Left ventricle myocardium superior (tissue), 1 donor: ENCODE measurements at regions of chr18 and their contacts with region 1.

Region 1: DNA sequence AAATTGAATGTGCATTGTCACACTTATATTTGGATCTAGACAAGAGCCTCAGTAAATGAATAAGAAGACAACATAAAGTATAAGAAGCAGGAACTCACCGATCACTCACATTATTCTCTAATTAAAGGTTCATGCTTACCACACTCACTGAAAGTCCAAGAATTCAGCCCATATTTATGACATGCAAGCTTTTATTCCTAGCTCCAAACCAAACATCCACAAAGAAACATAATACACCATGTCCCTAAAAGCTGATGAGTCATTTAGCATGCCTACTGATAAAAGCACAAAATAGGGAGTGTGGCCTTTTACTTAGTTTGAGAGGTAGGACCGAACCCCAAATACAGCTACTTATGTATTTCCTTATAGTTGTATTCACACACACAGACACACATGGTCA is 1094.6 kb upstream of the CDH2 start:
- DNase-seq: no peak
- ATAC-seq: no peak

Region 2: GRCh38 chr18:28372186-28372585 is 899.3 kb before region 1 on chr18:
- intact Hi-C with region 1: loop called (anchors 5 kb)
- DNase-seq: no peak
- ATAC-seq: no peak

Region 3: DNA sequence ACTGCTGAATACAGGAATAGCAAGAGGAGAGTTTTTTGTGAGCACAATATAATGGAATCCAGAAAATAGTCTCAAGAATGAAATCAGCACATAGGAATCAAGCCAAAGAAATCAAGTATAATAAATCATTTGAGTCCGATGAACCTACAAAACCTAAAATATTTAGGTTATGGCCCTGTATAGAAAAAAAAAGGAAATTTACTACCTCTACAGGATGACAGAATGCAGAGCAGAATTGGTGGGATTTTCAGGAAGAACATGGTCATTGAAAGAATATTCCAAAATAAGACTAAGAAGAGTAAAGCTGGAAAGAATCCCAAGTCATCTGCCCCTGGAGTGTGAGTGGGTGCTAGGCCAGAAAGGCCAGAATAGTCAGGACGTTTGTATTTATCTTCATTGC is 53.4 kb before region 1 on chr18:
- intact Hi-C with region 1: no loop called
- DNase-seq: no peak
- ATAC-seq: no peak